Mammary epithelial cell (primary cell): ENCODE measurements at regions of chr18 and their contacts with region 1.

Region 1: GRCh38 chr18:58781627-58782194 is 83.0 kb upstream of the ZNF532 start:
- DNase-seq: peak; percentile 72
- H3K4me3 ChIP-seq: no peak overlapping the region
- H3K27ac ChIP-seq: no peak overlapping the region
- H3K4me1 ChIP-seq: peaks cover 25% of the 10 kb centered on the region
- H3K27me3 ChIP-seq: no peaks in the 10 kb centered on the region
- CTCF ChIP-seq: peak; percentile 72 to 85

Region 2: GRCh38 chr18:58792086-58792485 is 10.4 kb after region 1 on chr18:
- CTCF ChIA-PET with region 1: no interaction called
- dilution Hi-C with region 1: no loop called
- in situ Hi-C with region 1: no loop called
- intact Hi-C with region 1: loop called (anchors 1 kb)
- DNase-seq: no peak
- H3K4me3 ChIP-seq: no peak overlapping the region
- H3K27ac ChIP-seq: no peak overlapping the region
- H3K4me1 ChIP-seq: peaks cover 20% of the 10 kb centered on the region
- H3K27me3 ChIP-seq: no peaks in the 10 kb centered on the region
- CTCF ChIP-seq: no peak

Region 3: GRCh38 chr18:58831606-58832005 is 49.9 kb after region 1 on chr18:
- CTCF ChIA-PET with region 1: no interaction called
- dilution Hi-C with region 1: no loop called
- in situ Hi-C with region 1: no loop called
- intact Hi-C with region 1: no loop called
- DNase-seq: peak; percentile 61
- H3K4me3 ChIP-seq: no peak overlapping the region
- H3K27ac ChIP-seq: no peak overlapping the region
- H3K4me1 ChIP-seq: no peaks in the 10 kb centered on the region
- H3K27me3 ChIP-seq: no peaks in the 10 kb centered on the region
- CTCF ChIP-seq: no peak

Region 4: GRCh38 chr18:58863539-58864145 is 81.9 kb after region 1 on chr18:
- CTCF ChIA-PET with region 1: no interaction called
- dilution Hi-C with region 1: no loop called
- in situ Hi-C with region 1: loop called in 1 of 2 experiments (anchors 5 kb)
- intact Hi-C with region 1: loop called (anchors 1 kb)
- DNase-seq: no peak
- H3K4me3 ChIP-seq: peak overlapping the region; percentile 28 to 54 (median 46)
- H3K27ac ChIP-seq: peak overlapping the region; percentile 58
- H3K4me1 ChIP-seq: peaks cover 70% of the 10 kb centered on the region
- H3K27me3 ChIP-seq: no peaks in the 10 kb centered on the region
- CTCF ChIP-seq: no peak

Region 5: DNA sequence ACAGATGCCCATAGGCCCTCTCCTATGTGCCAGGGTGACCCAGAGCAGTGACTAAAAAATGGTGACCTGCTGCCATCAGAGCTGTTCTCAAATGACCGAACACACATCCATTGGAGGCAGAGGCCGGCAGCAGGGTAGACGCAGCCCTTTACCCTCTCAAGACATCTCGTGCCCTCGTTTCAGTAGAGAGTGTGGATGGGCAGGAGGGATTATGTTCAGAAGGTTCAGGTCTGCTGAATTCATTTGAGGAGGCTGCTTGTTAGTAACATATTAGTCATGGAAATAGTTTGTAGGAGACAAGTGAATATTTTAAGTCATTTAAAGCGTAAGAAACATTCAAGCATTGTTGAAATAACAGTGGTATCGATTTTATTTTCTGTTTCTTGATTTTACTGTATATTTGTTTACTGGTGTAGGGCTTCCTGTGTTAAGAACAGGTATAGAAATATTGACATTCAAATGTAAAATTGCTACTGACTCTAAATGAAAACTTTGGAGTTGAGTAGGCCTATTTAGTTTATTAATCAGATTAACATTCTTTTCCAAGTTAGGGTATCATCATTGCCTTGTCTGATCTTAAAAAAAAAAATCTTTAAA is 165.5 kb after region 1 on chr18:
- CTCF ChIA-PET with region 1: no interaction called
- dilution Hi-C with region 1: no loop called
- in situ Hi-C with region 1: no loop called
- intact Hi-C with region 1: loop called (anchors 5 kb)
- DNase-seq: no peak
- H3K4me3 ChIP-seq: no peak overlapping the region
- H3K27ac ChIP-seq: no peak overlapping the region
- H3K4me1 ChIP-seq: no peaks in the 10 kb centered on the region
- H3K27me3 ChIP-seq: no peaks in the 10 kb centered on the region
- CTCF ChIP-seq: no peak

Region 6: DNA sequence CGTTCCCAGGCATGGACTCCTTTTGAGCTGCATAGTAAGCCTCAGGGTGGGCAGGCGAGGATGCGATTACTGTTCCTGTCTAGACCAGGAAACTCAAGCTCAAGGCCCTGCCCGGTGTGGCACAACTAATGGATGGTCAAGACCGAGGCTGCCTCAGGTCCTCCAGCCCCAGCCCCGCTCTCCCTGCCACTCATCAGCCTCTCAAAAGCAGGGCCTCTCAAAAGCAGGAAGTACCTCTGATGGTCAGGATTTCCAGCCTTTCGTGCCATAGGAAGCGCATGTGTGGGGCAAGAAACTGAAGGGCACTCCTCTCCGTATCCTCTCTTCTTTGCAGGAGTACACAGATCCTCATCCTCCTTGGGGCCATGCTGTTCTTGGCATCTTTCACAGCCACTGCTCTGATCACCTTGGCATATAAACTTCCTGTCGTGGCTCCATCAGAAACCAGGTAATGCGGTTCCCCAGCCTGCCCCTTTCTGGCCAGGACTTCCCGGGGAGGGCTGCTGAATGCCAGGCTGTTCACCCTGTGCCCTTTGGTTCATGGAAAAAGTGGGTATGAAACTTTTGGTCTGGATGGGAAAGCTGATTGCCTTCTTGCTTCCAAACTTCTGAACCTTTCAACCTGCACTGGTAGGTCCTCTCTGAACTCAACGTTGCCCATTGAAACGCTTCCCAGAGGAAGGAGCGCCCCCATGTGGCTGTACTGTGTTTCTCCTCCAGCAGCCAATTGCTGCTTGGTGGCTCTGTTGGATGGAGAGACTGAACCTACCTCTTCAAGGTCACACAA is 275.2 kb after region 1 on chr18:
- CTCF ChIA-PET with region 1: no interaction called
- dilution Hi-C with region 1: loop called (anchors 5 kb)
- in situ Hi-C with region 1: loop called (anchors 5 kb)
- intact Hi-C with region 1: loop called (anchors 1 kb)
- DNase-seq: peak; percentile 58
- H3K4me3 ChIP-seq: no peak overlapping the region
- H3K27ac ChIP-seq: no peak overlapping the region
- H3K4me1 ChIP-seq: no peaks in the 10 kb centered on the region
- H3K27me3 ChIP-seq: no peaks in the 10 kb centered on the region
- CTCF ChIP-seq: peak; percentile 92 to 96

Region 7: DNA sequence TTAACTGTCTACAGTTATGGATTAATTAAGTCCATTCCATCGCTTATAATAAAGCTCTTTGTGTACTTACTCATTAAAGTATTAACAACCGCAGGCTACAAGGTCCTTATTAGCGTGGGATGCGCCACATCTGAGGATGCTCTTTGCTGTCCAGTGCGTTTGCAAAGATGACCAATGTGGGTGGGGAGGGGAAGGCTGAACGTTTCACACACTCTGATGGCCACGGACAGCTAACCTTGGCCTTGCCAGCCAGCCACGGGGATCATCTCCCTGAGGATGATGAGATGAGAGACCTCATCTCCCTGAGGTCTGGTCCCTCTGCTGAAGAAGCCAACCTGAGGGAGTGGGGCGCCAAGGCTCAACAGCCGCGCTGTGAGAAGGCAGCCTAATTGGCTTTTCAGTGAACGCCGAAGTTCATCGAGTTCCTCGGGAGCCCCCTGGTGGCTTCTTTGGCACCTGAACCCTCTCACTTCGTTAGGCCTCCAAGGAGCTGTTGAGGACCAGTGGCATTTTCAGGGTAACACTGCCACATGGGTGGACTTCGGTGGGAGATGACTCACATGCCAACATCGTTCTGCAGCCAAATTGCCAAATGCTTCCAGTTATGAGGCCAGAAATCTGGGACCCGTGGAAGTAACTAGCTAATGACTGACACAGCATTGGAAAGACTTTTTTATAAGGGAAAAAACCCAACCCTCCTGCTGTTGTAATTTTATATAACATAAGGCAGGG is 288.6 kb after region 1 on chr18:
- CTCF ChIA-PET with region 1: no interaction called
- dilution Hi-C with region 1: no loop called
- in situ Hi-C with region 1: no loop called
- intact Hi-C with region 1: loop called (anchors 1 kb)
- DNase-seq: peak; percentile 67
- H3K4me3 ChIP-seq: no peak overlapping the region
- H3K27ac ChIP-seq: no peak overlapping the region
- H3K4me1 ChIP-seq: peaks cover 3% of the 10 kb centered on the region
- H3K27me3 ChIP-seq: no peaks in the 10 kb centered on the region
- CTCF ChIP-seq: peak; percentile 86 to 88